Posterior vena cava (tissue), 2 donors: ENCODE measurements at regions of chr15 and their contacts with region 1.

Region 1: DNA sequence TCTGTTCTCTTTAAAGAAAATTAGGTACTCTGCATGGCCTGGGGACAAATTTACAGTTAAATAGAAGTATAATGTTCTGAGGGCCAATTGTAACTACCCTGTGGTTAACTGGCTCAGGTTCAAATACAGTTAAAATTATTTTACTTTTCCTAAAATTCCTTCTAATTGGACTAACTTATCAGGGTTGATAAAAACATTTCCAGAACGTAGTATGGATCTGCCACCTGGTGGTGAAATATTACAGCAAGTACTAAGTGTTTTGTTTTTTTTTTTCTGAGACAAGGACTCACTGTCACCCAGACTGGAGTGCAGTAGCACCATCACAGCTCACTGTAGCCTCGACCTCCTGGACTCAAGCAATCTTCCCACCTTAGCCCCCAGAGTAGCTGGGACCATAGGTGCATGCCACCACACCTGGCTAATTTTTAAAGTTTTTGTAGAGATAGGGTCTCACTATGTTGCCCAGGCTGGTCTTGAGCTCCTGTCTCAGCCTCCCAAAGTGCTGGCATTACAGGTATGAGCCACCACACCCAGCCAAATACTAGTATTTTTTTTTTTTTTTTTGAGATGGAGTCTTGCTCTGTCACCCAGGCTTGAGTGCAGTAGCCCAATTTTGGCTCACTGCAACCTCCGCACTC is 29.2 kb downstream of the NEO1 start:
- DNase-seq: no peak

Region 2: DNA sequence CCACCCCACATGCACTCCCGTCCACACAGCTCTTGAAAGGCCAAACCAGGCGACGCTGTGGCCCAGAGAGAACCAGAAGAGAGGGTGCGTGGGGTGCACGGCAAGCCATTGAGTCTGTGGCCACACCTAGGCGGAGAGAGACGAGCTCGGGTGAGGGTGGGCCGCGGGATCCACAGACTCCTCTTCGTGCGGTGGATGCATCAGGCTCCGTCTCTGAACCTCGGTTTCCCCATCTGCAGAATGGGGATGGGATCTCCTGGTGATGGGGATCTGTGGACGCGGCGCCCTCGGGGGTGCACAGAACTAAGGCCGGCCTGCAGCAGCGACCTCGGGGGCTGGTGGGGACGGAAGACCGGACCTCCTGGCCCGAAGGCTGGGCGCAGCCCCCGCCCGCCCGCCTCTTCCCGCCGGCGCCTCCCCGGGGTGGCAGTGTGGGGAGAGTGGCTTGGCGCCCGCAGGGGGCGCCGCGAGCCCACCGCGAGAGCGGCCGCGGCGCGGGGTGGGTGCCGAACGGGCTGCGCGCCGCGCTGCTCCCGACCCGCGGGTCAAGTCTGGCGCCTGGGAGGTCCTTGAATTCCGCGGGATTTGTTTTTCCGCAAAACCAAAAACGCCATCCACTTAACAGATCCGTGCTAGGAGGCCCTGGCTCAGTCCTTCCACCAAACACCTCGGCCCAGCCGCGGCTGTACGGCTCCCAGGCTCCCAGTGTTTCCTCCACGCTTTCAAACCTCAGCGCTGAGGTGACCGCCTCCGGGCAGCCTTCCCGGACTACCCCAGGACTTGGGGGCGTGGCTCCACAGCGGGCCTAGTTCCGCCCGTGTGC is 284.7 kb before region 1 on chr15:
- intact Hi-C with region 1: loop called (anchors 5 to 10 kb)
- DNase-seq: peak; percentile 87

Region 3: DNA sequence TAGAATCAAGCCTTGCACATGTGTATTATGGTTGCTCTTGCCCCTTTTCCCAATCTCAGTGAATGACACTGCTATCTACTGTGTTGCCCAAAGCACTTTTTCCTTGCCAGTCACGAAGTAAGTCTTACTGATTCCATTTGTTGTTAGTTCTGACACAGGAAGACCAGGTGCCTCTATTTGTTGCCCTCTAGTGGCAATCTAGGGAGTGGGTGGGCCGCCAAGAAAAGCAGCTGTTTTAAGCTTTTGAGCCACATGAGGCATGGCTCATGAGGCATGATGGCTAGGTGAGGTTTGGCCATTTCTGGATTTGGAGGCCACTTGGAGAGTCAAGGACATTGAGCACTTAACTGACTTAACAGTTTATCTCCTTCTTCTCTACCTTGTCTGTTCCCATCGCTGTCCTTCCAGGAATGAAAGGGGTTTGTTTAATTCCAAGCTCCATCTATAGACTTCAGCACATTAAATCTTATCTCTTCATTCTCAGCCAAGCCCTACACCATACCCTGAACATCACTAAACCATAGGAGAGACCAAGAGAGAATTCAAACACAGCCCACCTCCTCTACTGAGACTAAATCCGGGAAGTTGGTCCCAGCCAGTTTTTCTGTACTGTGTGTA is 184.2 kb after region 1 on chr15:
- intact Hi-C with region 1: no loop called
- DNase-seq: no peak

Region 4: GRCh38 chr15:73275862-73276261 is 194.4 kb after region 1 on chr15:
- intact Hi-C with region 1: loop called in 1 of 2 experiments (anchors 5 kb)
- DNase-seq: no peak